Activated T-helper 1 cell treated with anti-CD3 and anti-CD28 coated beads, Interleukin-12 subunit alpha, Interleukin-12 subunit beta, Interleukin-2, Interleukin-4 antibody, amounts not matched to agents 30 ng/mL and 10 ng/mL and 1 ng/mL, durations not matched to agents 14 hours and 24 hours and 36 hours (primary cell): ENCODE measurements at regions of chr15 and their contacts with region 1.

Region 1: GRCh38 chr15:39934397-39935071 is 619 bp downstream of the EIF2AK4 start:
- DNase-seq: no peak
- H3K4me3 Mint-ChIP-seq: peak overlapping the region; percentile 94
- H3K27ac Mint-ChIP-seq: peak overlapping the region; percentile 84
- H3K4me1 Mint-ChIP-seq: peaks cover 49% of the 10 kb centered on the region
- H3K27me3 Mint-ChIP-seq: no peaks in the 10 kb centered on the region

Region 2: GRCh38 chr15:38453971-38454695 is 1480.4 kb before region 1 on chr15 and contains the start of gene FAM98B:
- intact Hi-C with region 1: loop called (anchors 5 kb)
- DNase-seq: peak; percentile 85
- H3K4me3 Mint-ChIP-seq: peak within 1 kb of the TSS; percentile 96
- H3K27ac Mint-ChIP-seq: peak within 1 kb of the TSS; percentile 95
- H3K4me1 Mint-ChIP-seq: peaks cover 22% of the 10 kb centered on the region
- H3K27me3 Mint-ChIP-seq: peaks cover 19% of the 10 kb centered on the region
- total RNA-seq, gene FAM98B: 64.4 and 66.9 TPM in 2 replicates

Region 3: GRCh38 chr15:39704689-39705088 is 229.8 kb before region 1 on chr15:
- intact Hi-C with region 1: no loop called
- DNase-seq: no peak
- H3K4me3 Mint-ChIP-seq: no peak overlapping the region
- H3K27ac Mint-ChIP-seq: no peak overlapping the region
- H3K4me1 Mint-ChIP-seq: no peaks in the 10 kb centered on the region
- H3K27me3 Mint-ChIP-seq: peaks cover 2% of the 10 kb centered on the region

Region 4: DNA sequence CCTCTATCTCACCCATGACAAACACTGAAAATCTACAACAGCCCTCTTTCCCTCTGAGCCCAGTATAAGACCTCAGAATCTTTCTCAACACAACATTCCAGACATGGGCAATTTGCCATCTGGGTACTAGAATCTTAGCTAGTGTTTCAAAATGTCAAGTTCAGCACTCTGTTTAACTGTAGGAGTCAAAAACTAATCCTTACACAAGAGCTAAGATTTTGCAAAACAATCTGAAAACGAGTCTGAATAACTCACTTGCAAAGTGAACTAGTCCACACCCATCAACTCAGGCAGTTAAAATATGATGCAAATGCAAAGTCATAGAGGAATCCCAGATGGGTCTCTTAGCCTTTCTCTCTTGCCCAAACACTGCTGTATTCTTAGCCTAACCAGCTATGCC is 82.3 kb before region 1 on chr15:
- intact Hi-C with region 1: no loop called
- DNase-seq: no peak
- H3K4me3 Mint-ChIP-seq: no peak overlapping the region
- H3K27ac Mint-ChIP-seq: no peak overlapping the region
- H3K4me1 Mint-ChIP-seq: no peaks in the 10 kb centered on the region
- H3K27me3 Mint-ChIP-seq: peaks cover 24% of the 10 kb centered on the region

Region 5: GRCh38 chr15:39896846-39897245 is 37.7 kb before region 1 on chr15:
- intact Hi-C with region 1: no loop called
- DNase-seq: no peak
- H3K4me3 Mint-ChIP-seq: no peak overlapping the region
- H3K27ac Mint-ChIP-seq: no peak overlapping the region
- H3K4me1 Mint-ChIP-seq: no peaks in the 10 kb centered on the region
- H3K27me3 Mint-ChIP-seq: peaks cover 15% of the 10 kb centered on the region

Region 6: GRCh38 chr15:39920510-39921273 is 13.8 kb before region 1 on chr15:
- intact Hi-C with region 1: loop called (anchors 1 kb)
- DNase-seq: peak; percentile 71
- H3K4me3 Mint-ChIP-seq: peak overlapping the region; percentile 89
- H3K27ac Mint-ChIP-seq: peak overlapping the region; percentile 59
- H3K4me1 Mint-ChIP-seq: peaks cover 35% of the 10 kb centered on the region
- H3K27me3 Mint-ChIP-seq: peaks cover 30% of the 10 kb centered on the region

Region 7: GRCh38 chr15:39968273-39969001 is 33.9 kb after region 1 on chr15:
- intact Hi-C with region 1: loop called (anchors 1 kb)
- DNase-seq: no peak
- H3K4me3 Mint-ChIP-seq: no peak overlapping the region
- H3K27ac Mint-ChIP-seq: peak overlapping the region; percentile 63
- H3K4me1 Mint-ChIP-seq: peaks cover 34% of the 10 kb centered on the region
- H3K27me3 Mint-ChIP-seq: no peaks in the 10 kb centered on the region

Region 8: DNA sequence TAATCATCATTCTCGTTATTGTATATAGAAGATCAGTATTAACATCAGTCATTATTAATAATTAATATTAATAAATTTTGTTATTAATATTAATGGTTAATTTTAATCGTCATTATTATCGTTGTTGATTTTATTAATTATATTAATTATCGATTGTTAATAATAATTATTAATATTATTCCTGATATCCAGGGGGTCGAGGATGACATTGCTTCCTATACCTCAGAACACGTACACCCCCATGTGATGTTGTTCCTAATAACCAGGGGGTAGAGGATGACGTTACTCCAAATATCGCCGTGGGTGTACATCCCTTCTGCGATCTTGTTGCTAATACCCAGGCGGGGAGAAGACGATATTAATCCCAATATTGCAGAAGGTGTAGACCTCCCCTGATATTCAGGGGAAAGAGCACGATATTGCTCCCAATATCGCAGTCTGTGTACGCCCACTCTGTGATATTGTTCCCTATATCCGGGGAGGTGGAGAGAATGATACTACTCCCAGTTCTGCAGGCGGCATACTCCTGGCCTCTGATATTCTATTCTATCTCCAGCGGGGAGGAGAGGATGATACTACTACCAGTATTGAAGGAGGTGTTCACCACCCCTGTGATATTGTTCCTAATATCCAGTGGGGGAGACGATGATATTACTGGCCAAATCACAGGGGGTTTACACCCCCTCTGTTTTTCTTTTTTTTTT is 196.4 kb after region 1 on chr15:
- intact Hi-C with region 1: no loop called
- DNase-seq: no peak
- H3K4me3 Mint-ChIP-seq: no peak overlapping the region
- H3K27ac Mint-ChIP-seq: peak overlapping the region; percentile 21
- H3K4me1 Mint-ChIP-seq: no peaks in the 10 kb centered on the region
- H3K27me3 Mint-ChIP-seq: no peaks in the 10 kb centered on the region

Region 9: DNA sequence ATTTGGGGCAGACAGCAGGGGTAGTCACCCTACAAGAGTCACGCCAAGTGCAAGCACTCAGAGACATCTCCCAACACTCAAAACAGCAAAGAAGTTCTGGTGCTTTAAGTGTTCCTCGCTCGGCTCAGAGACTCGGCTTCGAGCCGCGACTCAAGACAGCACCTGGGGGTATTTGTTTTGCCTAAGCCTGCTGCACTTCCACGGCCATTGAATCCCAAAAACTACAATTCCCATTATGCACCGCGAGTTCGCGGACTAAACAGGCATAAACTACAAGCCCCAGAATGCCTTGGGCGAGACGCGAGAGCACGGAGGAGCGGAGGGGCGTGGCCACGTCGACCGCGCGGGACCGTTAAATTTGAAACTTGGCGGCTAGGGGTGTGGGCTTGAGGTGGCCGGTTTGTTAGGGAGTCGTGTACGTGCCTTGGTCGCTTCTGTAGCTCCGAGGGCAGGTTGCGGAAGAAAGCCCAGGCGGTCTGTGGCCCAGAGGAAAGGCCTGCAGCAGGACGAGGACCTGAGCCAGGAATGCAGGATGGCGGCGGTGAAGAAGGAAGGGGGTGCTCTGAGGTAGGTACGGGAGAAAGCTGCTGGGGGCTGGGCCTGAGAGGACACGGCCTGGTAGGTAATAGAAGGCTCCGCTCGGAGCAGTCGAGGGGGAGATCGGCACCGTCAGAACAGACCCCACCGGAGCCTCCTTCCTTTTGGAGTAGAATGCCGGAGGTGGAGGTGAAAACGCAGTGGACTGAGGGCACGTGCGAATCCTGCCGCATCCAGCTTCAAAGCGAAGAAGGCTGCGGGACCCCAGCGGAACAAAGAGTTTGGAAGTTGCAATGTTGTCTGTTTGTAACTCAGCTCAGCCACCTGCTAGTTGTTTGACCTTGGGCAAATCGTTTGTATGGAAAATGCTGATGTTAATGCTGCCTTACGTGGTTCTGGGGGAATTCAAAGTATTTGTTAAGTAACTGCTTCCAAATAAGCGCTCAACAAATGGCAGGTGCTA is 226.5 kb after region 1 on chr15 and contains the start of gene BUB1B:
- intact Hi-C with region 1: loop called (anchors 5 kb)
- DNase-seq: peak; percentile 93
- H3K4me3 Mint-ChIP-seq: no peak within 1 kb of the TSS
- H3K27ac Mint-ChIP-seq: no peak within 1 kb of the TSS
- H3K4me1 Mint-ChIP-seq: peaks cover 10% of the 10 kb centered on the region
- H3K27me3 Mint-ChIP-seq: no peaks in the 10 kb centered on the region
- total RNA-seq, gene BUB1B: 71.0 and 76.1 TPM in 2 replicates